ENCODE measurements at regions of chr5 and their contacts with region 1.

Region 1: GRCh38 chr5:15003511-15003920 is 131.9 kb upstream of the ANKH start:
- DNase-seq: no peak
- H3K4me3 ChIP-seq: no peak overlapping the region
- H3K27ac ChIP-seq: no peak overlapping the region
- H3K4me1 ChIP-seq: peaks cover 0 to 16% (median 12%) of the 10 kb centered on the region in 3 donors
- H3K27me3 ChIP-seq: no peaks in the 10 kb centered on the region
- CTCF ChIP-seq: peak; percentile 78 to 87 (median 80)
- POLR2A ChIP-seq: no peak

Region 2: DNA sequence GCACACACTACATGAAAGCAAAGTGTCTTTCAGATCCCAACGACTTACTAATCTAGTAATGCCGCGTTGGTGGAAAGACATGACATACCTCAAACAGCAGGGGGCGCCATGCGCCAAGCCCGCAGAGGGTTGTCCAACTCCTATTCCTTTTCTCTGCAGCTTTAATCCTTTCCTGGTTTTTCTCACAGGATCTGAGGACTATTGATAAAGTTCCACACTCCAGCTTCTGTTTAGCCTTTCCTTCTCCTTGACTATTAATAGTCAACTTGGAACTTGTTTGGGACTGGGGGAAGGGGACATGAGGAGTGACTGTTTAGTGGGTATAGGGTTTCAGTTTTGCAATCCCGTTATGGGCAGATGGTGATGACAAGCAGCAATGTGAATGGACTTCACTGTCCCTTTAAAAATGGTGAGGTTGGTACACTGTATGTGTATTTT is 276.1 kb before region 1 on chr5:
- intact Hi-C with region 1: loop called (anchors 5 kb)
- DNase-seq: no peak
- H3K4me3 ChIP-seq: no peak overlapping the region
- H3K27ac ChIP-seq: no peak overlapping the region
- H3K4me1 ChIP-seq: peaks cover 0 to 13% (median 3%) of the 10 kb centered on the region in 3 donors
- H3K27me3 ChIP-seq: no peaks in the 10 kb centered on the region
- CTCF ChIP-seq: peak; percentile 83 to 97 (median 95)
- POLR2A ChIP-seq: no peak

Region 3: GRCh38 chr5:14946815-14947640 is 56.5 kb before region 1 on chr5:
- intact Hi-C with region 1: loop called (anchors 10 kb)
- DNase-seq: no peak
- H3K4me3 ChIP-seq: no peak overlapping the region
- H3K27ac ChIP-seq: no peak overlapping the region
- H3K4me1 ChIP-seq: no peaks in the 10 kb centered on the region
- H3K27me3 ChIP-seq: no peaks in the 10 kb centered on the region
- CTCF ChIP-seq: peak in 5 of 6 experiments; percentile 13 to 52 (median 24)
- POLR2A ChIP-seq: no peak

Measured in esophagus squamous epithelium (tissue), 5 donors.